ENCODE measurements at regions of chr12 and their contacts with region 1.

Region 1: GRCh38 chr12:13094347-13094746 is 9.1 kb downstream of the GSG1 start:
- DNase-seq: no peak
- ATAC-seq: no peak
- H3K4me3 ChIP-seq: no peak overlapping the region
- H3K4me1 ChIP-seq: peaks cover 6% of the 10 kb centered on the region
- CTCF ChIP-seq: no peak

Region 2: GRCh38 chr12:13211859-13212664 is 117.7 kb after region 1 on chr12:
- intact Hi-C with region 1: loop called in 1 of 2 experiments (anchors 10 kb)
- DNase-seq: peak in 2 of 3 donors; percentile 41 to 84
- ATAC-seq: peak; percentile 51
- H3K4me3 ChIP-seq: no peak overlapping the region
- H3K4me1 ChIP-seq: peaks cover 8% of the 10 kb centered on the region
- CTCF ChIP-seq: peak; percentile 53

Measured in mucosa of descending colon (tissue), 3 donors.